ENCODE measurements at regions of chr5 and their contacts with region 1.

Region 1: GRCh38 chr5:150656191-150657132 is 4.6 kb upstream of the MYOZ3 start:
- DNase-seq: no peak
- H3K4me3 ChIP-seq: peak overlapping the region; percentile 46
- H3K27me3 ChIP-seq: peaks cover 3% of the 10 kb centered on the region
- CTCF ChIP-seq: peak; percentile 50

Region 2: GRCh38 chr5:150598821-150599273 is 57.6 kb before region 1 on chr5:
- CTCF ChIA-PET with region 1: no interaction called
- POLR2A ChIA-PET with region 1: no interaction called
- DNase-seq: no peak
- H3K4me3 ChIP-seq: no peak overlapping the region
- H3K27me3 ChIP-seq: no peaks in the 10 kb centered on the region
- CTCF ChIP-seq: no peak

Region 3: GRCh38 chr5:150640311-150641005 is 16.0 kb before region 1 on chr5 and contains the start of gene SYNPO:
- CTCF ChIA-PET with region 1: interaction called, 60 read pairs
- POLR2A ChIA-PET with region 1: interaction called, 3 read pairs
- DNase-seq: peak; percentile 89
- H3K4me3 ChIP-seq: peak within 1 kb of the TSS; percentile 50
- H3K27me3 ChIP-seq: no peaks in the 10 kb centered on the region
- CTCF ChIP-seq: 0 out of 2 replicates have a peak, but pooled peaks have one; percentile 7
- polyA plus RNA-seq, gene SYNPO: 4.8 and 8.4 TPM in 2 replicates

Region 4: DNA sequence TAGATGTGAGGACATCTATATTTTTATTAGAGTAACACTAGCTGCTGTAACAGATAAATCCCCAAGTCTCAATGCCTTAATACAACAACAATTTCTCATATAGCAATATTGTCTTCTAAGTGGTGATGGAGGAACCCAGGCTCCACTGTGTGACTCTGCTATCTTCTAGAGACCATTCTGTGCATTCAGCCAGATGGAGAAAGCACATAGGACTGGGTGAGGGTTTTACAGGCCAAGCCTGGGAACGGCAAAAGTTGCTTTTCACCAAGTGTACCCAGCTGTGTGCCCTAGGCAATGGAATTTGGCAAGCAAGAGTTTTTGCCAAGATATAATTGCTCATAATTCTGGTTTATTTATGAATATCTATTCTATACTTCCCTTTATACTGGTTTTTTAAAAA is 32.7 kb after region 1 on chr5:
- CTCF ChIA-PET with region 1: no interaction called
- POLR2A ChIA-PET with region 1: no interaction called
- DNase-seq: no peak
- H3K4me3 ChIP-seq: no peak overlapping the region
- H3K27me3 ChIP-seq: no peaks in the 10 kb centered on the region
- CTCF ChIP-seq: no peak

Region 5: GRCh38 chr5:150846654-150847333 is 190.3 kb after region 1 on chr5:
- CTCF ChIA-PET with region 1: interaction called, 10 read pairs
- POLR2A ChIA-PET with region 1: no interaction called
- DNase-seq: peak; percentile 50
- H3K4me3 ChIP-seq: no peak overlapping the region
- H3K27me3 ChIP-seq: peaks cover 2% of the 10 kb centered on the region
- CTCF ChIP-seq: peak; percentile 63